Endothelial cell of umbilical vein (primary cell): ENCODE measurements at regions of chr9 and their contacts with region 1.

Region 1: GRCh38 chr9:88355166-88355565 is 33.1 kb upstream of the SPIN1 start:
- DNase-seq: no peak
- H3K4me3 ChIP-seq: no peak overlapping the region
- H3K27ac ChIP-seq: no peak overlapping the region
- H3K4me1 ChIP-seq: no peaks in the 10 kb centered on the region
- H3K27me3 ChIP-seq: no peaks in the 10 kb centered on the region
- CTCF ChIP-seq: no peak
- POLR2A ChIP-seq: no peak

Region 2: DNA sequence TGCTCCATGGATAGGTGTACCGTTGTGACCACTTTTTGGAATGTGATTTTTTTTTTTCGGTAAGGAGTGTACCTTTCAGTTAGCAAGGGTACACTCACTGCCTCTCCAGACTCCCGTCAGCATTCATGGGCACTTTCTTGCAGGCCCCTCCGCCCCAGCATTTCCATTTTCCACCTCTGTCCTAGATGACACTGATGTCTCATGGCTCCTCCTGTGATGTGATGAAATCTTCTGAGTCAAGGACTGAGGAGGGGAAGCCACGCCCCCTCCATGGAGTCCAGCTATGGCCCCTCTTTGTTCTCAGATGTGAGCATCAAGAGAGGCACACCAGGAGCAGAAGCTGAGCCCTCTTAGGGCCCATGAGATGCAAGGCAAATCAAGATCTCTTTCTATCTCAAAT is 567.4 kb before region 1 on chr9:
- CTCF ChIA-PET with region 1: no interaction called
- POLR2A ChIA-PET with region 1: no interaction called
- dilution Hi-C with region 1: no loop called
- intact Hi-C with region 1: no loop called
- DNase-seq: no peak
- H3K4me3 ChIP-seq: no peak overlapping the region
- H3K27ac ChIP-seq: no peak overlapping the region
- H3K4me1 ChIP-seq: peaks cover under 1% of the 10 kb centered on the region
- H3K27me3 ChIP-seq: no peaks in the 10 kb centered on the region
- CTCF ChIP-seq: no peak
- POLR2A ChIP-seq: no peak

Region 3: GRCh38 chr9:87850391-87850790 is 504.8 kb before region 1 on chr9:
- CTCF ChIA-PET with region 1: no interaction called
- POLR2A ChIA-PET with region 1: no interaction called
- dilution Hi-C with region 1: no loop called
- intact Hi-C with region 1: loop called (anchors 10 kb)
- DNase-seq: no peak
- H3K4me3 ChIP-seq: no peak overlapping the region
- H3K27ac ChIP-seq: no peak overlapping the region
- H3K4me1 ChIP-seq: no peaks in the 10 kb centered on the region
- H3K27me3 ChIP-seq: no peaks in the 10 kb centered on the region
- CTCF ChIP-seq: no peak
- POLR2A ChIP-seq: no peak

Region 4: GRCh38 chr9:88084357-88085183 is 270.6 kb before region 1 on chr9:
- CTCF ChIA-PET with region 1: no interaction called
- POLR2A ChIA-PET with region 1: no interaction called
- dilution Hi-C with region 1: no loop called
- intact Hi-C with region 1: no loop called
- DNase-seq: no peak
- H3K4me3 ChIP-seq: no peak overlapping the region
- H3K27ac ChIP-seq: no peak overlapping the region
- H3K4me1 ChIP-seq: no peaks in the 10 kb centered on the region
- H3K27me3 ChIP-seq: no peaks in the 10 kb centered on the region
- CTCF ChIP-seq: no peak
- POLR2A ChIP-seq: no peak

Region 5: DNA sequence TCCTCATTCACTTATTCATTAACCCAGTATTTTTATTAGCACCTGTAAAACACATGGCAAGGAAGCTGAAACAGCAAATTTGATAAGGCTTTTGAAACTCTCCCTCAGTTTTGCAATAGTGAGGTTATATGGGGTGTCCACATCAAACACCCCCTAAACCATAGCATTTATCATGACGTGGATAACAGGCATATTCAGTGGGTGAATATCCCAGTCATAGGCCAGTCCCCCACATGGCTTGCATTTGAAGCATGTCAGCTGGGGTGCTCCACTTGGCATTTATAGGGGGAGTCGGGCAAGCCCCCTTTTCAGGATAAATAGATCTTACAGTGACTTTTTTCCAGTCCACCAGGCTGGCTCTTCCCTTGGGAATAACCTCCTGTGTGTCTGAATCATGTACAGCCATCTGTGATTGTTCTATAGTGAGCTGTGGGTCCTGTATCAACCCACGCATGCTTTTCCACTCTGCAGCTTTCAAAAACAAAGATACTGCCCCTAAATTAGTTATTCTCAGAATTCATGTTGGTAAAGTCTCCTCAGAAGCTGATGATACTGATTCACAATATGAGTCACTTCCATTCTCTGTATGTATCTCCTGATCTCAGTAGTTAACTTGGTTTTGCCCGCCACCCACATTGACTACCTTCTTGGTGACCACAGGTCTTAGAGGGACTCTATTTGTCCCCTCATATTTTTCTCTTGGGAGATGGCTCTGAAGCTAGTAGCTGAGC is 51.3 kb before region 1 on chr9:
- CTCF ChIA-PET with region 1: no interaction called
- POLR2A ChIA-PET with region 1: no interaction called
- dilution Hi-C with region 1: no loop called
- intact Hi-C with region 1: no loop called
- DNase-seq: no peak
- H3K4me3 ChIP-seq: no peak overlapping the region
- H3K27ac ChIP-seq: no peak overlapping the region
- H3K4me1 ChIP-seq: no peaks in the 10 kb centered on the region
- H3K27me3 ChIP-seq: no peaks in the 10 kb centered on the region
- CTCF ChIP-seq: no peak
- POLR2A ChIP-seq: no peak